ENCODE measurements at regions of chr17 and their contacts with region 1.

Region 1: GRCh38 chr17:44708401-44709181 is at the start of gene DBF4B:
- DNase-seq: peak; percentile 65
- ATAC-seq: peak; percentile 96
- H3K4me3 Mint-ChIP-seq: no peak within 1 kb of the TSS
- H3K27ac Mint-ChIP-seq: no peak within 1 kb of the TSS
- H3K4me1 Mint-ChIP-seq: no peaks in the 10 kb centered on the region
- H3K27me3 Mint-ChIP-seq: peaks cover 10% of the 10 kb centered on the region
- CTCF ChIP-seq: no peak
- total RNA-seq, gene DBF4B: 10.3 and 13.8 TPM in 2 replicates

Region 2: GRCh38 chr17:44689477-44690217 is 18.9 kb before region 1 on chr17 and contains the start of gene CCDC43:
- CTCF ChIA-PET with region 1: no interaction called
- POLR2A ChIA-PET with region 1: interaction called, 21 read pairs
- intact Hi-C with region 1: loop called (anchors 1 kb)
- DNase-seq: peak; percentile 90
- ATAC-seq: peak; percentile 100
- H3K4me3 Mint-ChIP-seq: peak within 1 kb of the TSS; percentile 98
- H3K27ac Mint-ChIP-seq: peak within 1 kb of the TSS; percentile 91
- H3K4me1 Mint-ChIP-seq: peaks cover 25% of the 10 kb centered on the region
- H3K27me3 Mint-ChIP-seq: no peaks in the 10 kb centered on the region
- CTCF ChIP-seq: no peak
- total RNA-seq, gene CCDC43: 20.1 and 22.4 TPM in 2 replicates

Region 3: GRCh38 chr17:44899069-44899782 is 190.6 kb after region 1 on chr17 and contains the start of gene EFTUD2:
- CTCF ChIA-PET with region 1: no interaction called
- POLR2A ChIA-PET with region 1: no interaction called
- intact Hi-C with region 1: loop called (anchors 10 kb)
- DNase-seq: peak; percentile 94
- ATAC-seq: peak; percentile 93
- H3K4me3 Mint-ChIP-seq: peak within 1 kb of the TSS; percentile 96
- H3K27ac Mint-ChIP-seq: peak within 1 kb of the TSS; percentile 99
- H3K4me1 Mint-ChIP-seq: peaks cover 31% of the 10 kb centered on the region
- H3K27me3 Mint-ChIP-seq: peaks cover 4% of the 10 kb centered on the region
- CTCF ChIP-seq: no peak
- total RNA-seq, gene EFTUD2: 168 and 192 TPM in 2 replicates